ENCODE measurements at regions of chr3 and their contacts with region 1.

Region 1: DNA sequence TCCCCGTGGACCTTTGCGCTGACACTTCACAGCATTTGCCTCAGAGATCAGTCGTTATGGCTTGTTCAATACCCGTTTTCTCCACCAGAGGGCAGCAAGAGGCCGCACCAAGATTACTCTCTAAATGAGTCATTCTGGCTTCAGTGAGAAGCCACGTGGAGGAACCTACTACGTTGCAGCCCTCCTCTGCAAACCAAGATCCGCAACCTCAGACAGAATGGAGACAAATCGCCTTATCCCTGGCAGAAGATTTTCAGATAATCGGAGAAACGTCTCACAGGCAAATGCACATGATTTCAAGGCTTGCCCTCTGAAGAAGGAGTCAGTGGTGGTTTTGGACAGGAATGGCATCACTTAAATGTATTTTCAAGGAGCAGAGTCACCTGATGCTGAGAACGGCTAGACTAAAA is 60.5 kb downstream of the GTPBP8 start:
- DNase-seq: peak; percentile 97
- ATAC-seq: peak; percentile 95
- H3K4me3 ChIP-seq: peak overlapping the region; percentile 39
- H3K27ac ChIP-seq: no peak overlapping the region
- H3K4me1 ChIP-seq: peaks cover 4% of the 10 kb centered on the region
- H3K27me3 ChIP-seq: no peaks in the 10 kb centered on the region
- CTCF ChIP-seq: peak; percentile 95

Region 2: DNA sequence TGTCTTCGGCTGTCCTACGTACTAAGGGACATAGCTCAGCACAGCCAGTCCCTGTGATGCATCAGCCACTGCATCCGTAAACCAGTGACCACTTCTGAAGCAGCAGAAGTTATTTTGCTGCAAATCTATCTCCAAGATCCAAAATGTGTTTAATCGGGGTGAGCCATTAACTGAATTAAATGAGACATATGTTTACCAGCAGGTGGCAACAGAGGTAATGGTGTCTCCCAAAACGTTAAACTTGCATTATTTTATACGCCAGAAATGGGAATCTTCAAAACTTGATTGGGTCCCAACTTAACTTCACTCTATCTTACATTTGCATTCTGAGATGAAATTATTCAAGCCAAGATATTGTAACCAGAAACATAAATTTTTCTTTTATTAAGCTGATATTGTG is 84.8 kb after region 1 on chr3:
- CTCF ChIA-PET with region 1: no interaction called
- POLR2A ChIA-PET with region 1: interaction called, 3 read pairs
- intact Hi-C with region 1: loop called (anchors 1 kb)
- DNase-seq: peak; percentile 60
- ATAC-seq: peak; percentile 46
- H3K4me3 ChIP-seq: no peak overlapping the region
- H3K27ac ChIP-seq: no peak overlapping the region
- H3K4me1 ChIP-seq: peaks cover 16% of the 10 kb centered on the region; the same call in 1 of the 2 replicates
- H3K27me3 ChIP-seq: no peaks in the 10 kb centered on the region
- CTCF ChIP-seq: peak; percentile 90

Region 3: DNA sequence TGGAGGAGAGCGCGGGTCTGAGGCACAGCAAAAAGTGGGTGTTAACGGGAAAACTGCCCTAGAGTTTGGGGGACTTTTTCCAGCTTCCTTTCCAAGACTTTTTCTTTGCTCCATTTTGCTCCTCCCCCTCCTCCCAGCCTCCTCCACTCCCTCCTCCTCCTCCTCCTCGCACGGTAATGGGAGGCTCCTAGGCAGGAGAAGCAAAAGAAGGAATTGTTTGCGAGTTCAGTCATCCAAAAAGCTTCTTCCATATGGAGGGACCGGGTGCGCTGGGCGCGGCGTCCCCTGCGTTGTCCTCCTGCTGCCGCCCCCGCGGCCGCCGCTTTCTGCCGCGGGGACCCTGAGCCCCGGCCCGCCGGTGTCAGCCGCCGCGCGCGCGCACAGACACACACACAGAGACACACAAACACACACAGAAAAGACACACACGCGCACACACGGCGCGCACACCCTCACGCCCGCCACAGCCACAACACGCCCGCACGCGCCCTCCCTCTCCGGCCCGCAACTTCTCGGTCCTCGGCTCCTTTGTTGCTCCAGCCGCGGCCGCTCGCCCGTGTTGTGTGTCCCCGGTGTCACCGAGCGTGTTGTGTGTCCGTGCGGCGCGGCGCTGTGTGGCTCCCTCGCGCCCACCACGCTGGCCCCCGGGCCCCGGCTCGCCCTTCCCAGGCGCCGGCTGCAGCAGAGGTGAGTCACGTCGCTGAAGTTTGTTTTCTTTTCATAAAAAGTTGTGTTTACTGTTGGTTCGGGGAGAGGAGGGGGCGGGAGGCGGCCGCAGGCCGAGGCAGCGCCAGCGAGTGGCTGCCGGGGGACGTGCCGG is 160.2 kb after region 1 on chr3 and contains the start of gene BOC:
- CTCF ChIA-PET with region 1: no interaction called
- POLR2A ChIA-PET with region 1: no interaction called
- intact Hi-C with region 1: loop called (anchors 1 kb)
- DNase-seq: peak; percentile 69
- ATAC-seq: peak; percentile 74
- H3K4me3 ChIP-seq: peak within 1 kb of the TSS; percentile 86
- H3K27ac ChIP-seq: 0 out of 2 replicates have a peak within 1 kb of the TSS, but pooled peaks have one; percentile 16
- H3K4me1 ChIP-seq: peaks cover 7% of the 10 kb centered on the region
- H3K27me3 ChIP-seq: no peaks in the 10 kb centered on the region
- CTCF ChIP-seq: no peak
- total RNA-seq, gene BOC: 4.4 and 7.3 TPM in 2 replicates

Region 4: GRCh38 chr3:113275929-113276750 is 224.8 kb after region 1 on chr3:
- CTCF ChIA-PET with region 1: no interaction called
- POLR2A ChIA-PET with region 1: no interaction called
- intact Hi-C with region 1: loop called (anchors 1 kb)
- DNase-seq: peak; percentile 55
- ATAC-seq: peak; percentile 89
- H3K4me3 ChIP-seq: no peak overlapping the region
- H3K27ac ChIP-seq: no peak overlapping the region
- H3K4me1 ChIP-seq: peaks cover 10% of the 10 kb centered on the region; the same call in 1 of the 2 replicates
- H3K27me3 ChIP-seq: no peaks in the 10 kb centered on the region
- CTCF ChIP-seq: peak; percentile 43; the same call in 1 of the 2 replicates

Region 5: DNA sequence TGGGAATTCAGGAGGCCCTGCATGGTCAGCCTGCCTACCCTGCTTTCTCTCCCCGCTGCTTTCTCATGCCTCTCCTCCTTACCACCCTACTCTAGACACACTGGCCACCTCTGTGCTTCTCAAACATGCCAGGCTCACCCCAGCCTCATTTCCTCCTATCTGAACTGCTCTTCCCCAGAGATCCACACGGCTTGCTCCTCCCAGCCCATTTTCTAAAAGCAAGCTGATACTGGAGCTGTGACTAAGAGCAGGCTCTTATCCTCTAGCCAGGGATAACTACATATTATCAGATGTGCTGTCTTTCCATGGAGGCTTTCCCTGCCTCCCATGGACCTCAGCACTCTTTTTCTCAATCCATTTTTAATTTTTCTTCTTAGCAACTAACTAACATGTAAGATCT is 246.0 kb after region 1 on chr3:
- CTCF ChIA-PET with region 1: no interaction called
- POLR2A ChIA-PET with region 1: no interaction called
- intact Hi-C with region 1: no loop called
- DNase-seq: no peak
- ATAC-seq: no peak
- H3K4me3 ChIP-seq: no peak overlapping the region
- H3K27ac ChIP-seq: no peak overlapping the region
- H3K4me1 ChIP-seq: no peaks in the 10 kb centered on the region
- H3K27me3 ChIP-seq: no peaks in the 10 kb centered on the region
- CTCF ChIP-seq: no peak

Region 6: GRCh38 chr3:113626503-113627371 is 575.4 kb after region 1 on chr3:
- CTCF ChIA-PET with region 1: no interaction called
- POLR2A ChIA-PET with region 1: no interaction called
- intact Hi-C with region 1: loop called (anchors 5 kb)
- DNase-seq: peak; percentile 70
- ATAC-seq: peak; percentile 84
- H3K4me3 ChIP-seq: no peak overlapping the region
- H3K27ac ChIP-seq: no peak overlapping the region
- H3K4me1 ChIP-seq: no peaks in the 10 kb centered on the region
- H3K27me3 ChIP-seq: no peaks in the 10 kb centered on the region
- CTCF ChIP-seq: peak; percentile 96